Psoas muscle (tissue), 8 donors: ENCODE measurements at regions of chr2 and their contacts with region 1.

Region 1: DNA sequence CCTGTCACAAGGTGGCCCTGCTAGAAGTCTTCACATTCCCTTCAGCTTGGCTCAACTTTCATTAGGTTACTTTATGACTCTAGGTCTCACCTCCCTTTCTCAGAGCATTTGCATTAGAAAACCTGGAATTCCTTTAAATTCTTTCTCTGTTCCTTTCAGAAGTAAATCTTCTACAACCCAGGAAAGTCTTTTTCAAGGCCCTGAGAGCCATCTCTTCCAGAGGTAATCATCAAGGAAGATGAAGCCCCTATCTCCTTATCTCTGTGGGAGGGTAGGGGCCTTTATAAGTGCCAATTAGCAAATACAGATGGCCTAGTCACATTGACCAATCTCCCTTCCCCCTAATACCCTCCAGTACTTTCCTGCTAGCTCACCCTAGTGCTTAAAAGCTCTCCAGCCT is 848.0 kb upstream of the FAM98A start:
- DNase-seq: no peak
- ATAC-seq: no peak
- H3K4me3 ChIP-seq: no peak overlapping the region
- H3K27ac ChIP-seq: no peak overlapping the region
- H3K4me1 ChIP-seq: no peaks in the 10 kb centered on the region
- H3K27me3 ChIP-seq: no peaks in the 10 kb centered on the region
- CTCF ChIP-seq: no peak

Region 2: GRCh38 chr2:34486959-34487358 is 39.9 kb after region 1 on chr2:
- intact Hi-C with region 1: no loop called
- DNase-seq: no peak
- ATAC-seq: no peak
- H3K4me3 ChIP-seq: no peak overlapping the region
- H3K27ac ChIP-seq: no peak overlapping the region
- H3K4me1 ChIP-seq: no peaks in the 10 kb centered on the region
- H3K27me3 ChIP-seq: peaks cover 0 to 2% (median 0%) of the 10 kb centered on the region in 3 donors
- CTCF ChIP-seq: no peak

Region 3: GRCh38 chr2:34529965-34530364 is 82.9 kb after region 1 on chr2:
- intact Hi-C with region 1: loop called in 1 of 2 experiments (anchors 5 kb)
- DNase-seq: no peak
- ATAC-seq: no peak
- H3K4me3 ChIP-seq: no peak overlapping the region
- H3K27ac ChIP-seq: no peak overlapping the region
- H3K4me1 ChIP-seq: no peaks in the 10 kb centered on the region
- H3K27me3 ChIP-seq: no peaks in the 10 kb centered on the region
- CTCF ChIP-seq: no peak